ENCODE measurements at regions of chr5 and their contacts with region 1.

Region 1: GRCh38 chr5:76715736-76716455 is at the start of gene F2R:
- DNase-seq: no peak
- ATAC-seq: peak; percentile 82
- H3K4me3 ChIP-seq: peak within 1 kb of the TSS; percentile 79
- H3K27ac ChIP-seq: no peak within 1 kb of the TSS
- H3K4me1 ChIP-seq: peaks cover 16% of the 10 kb centered on the region
- H3K27me3 ChIP-seq: peaks cover 0 to 13% of the 10 kb centered on the region in 2 experiments; a peak in 2 of 4 replicates
- CTCF ChIP-seq: peak; percentile 38 to 64 (median 49); a peak in 4 of 6 replicates
- EP300 ChIP-seq: no peak
- POLR2A ChIP-seq: peak; percentile 35; the same call in 1 of the 2 replicates
- RAD21 ChIP-seq: peak; percentile 34; the same call in 1 of the 2 replicates
- polyA plus RNA-seq, gene F2R: 1.8 to 2.4 TPM

Region 2: GRCh38 chr5:76451031-76451701 is 264.7 kb before region 1 on chr5:
- CTCF ChIA-PET with region 1: no interaction called
- POLR2A ChIA-PET with region 1: no interaction called
- RAD21 ChIA-PET with region 1: no interaction called
- SMC1A ChIA-PET with region 1: no interaction called
- in situ Hi-C with region 1: no loop called
- intact Hi-C with region 1: no loop called
- DNase-seq: no peak
- ATAC-seq: no peak
- H3K4me3 ChIP-seq: no peak overlapping the region
- H3K27ac ChIP-seq: no peak overlapping the region
- H3K4me1 ChIP-seq: no peaks in the 10 kb centered on the region
- H3K27me3 ChIP-seq: no peaks in the 10 kb centered on the region
- CTCF ChIP-seq: no peak
- EP300 ChIP-seq: no peak
- POLR2A ChIP-seq: no peak
- RAD21 ChIP-seq: no peak

Region 3: GRCh38 chr5:76601470-76601869 is 114.4 kb before region 1 on chr5:
- CTCF ChIA-PET with region 1: interaction called, 6 read pairs
- POLR2A ChIA-PET with region 1: no interaction called
- RAD21 ChIA-PET with region 1: no interaction called
- SMC1A ChIA-PET with region 1: interaction called, 10 read pairs
- in situ Hi-C with region 1: no loop called
- intact Hi-C with region 1: loop called (anchors 2 kb)
- DNase-seq: no peak
- ATAC-seq: peak; percentile 89
- H3K4me3 ChIP-seq: no peak overlapping the region
- H3K27ac ChIP-seq: no peak overlapping the region
- H3K4me1 ChIP-seq: no peaks in the 10 kb centered on the region
- H3K27me3 ChIP-seq: no peaks in the 10 kb centered on the region
- CTCF ChIP-seq: peak; percentile 58 to 72 (median 71); a peak in 5 of 6 replicates
- EP300 ChIP-seq: no peak
- POLR2A ChIP-seq: no peak
- RAD21 ChIP-seq: peak; percentile 94

Region 4: GRCh38 chr5:76701298-76701697 is 14.6 kb before region 1 on chr5:
- CTCF ChIA-PET with region 1: interaction called, 10 read pairs
- POLR2A ChIA-PET with region 1: no interaction called
- RAD21 ChIA-PET with region 1: interaction called, 3 read pairs
- SMC1A ChIA-PET with region 1: interaction called, 7 read pairs
- in situ Hi-C with region 1: no loop called
- intact Hi-C with region 1: no loop called
- DNase-seq: no peak
- ATAC-seq: no peak
- H3K4me3 ChIP-seq: no peak overlapping the region
- H3K27ac ChIP-seq: no peak overlapping the region
- H3K4me1 ChIP-seq: no peaks in the 10 kb centered on the region
- H3K27me3 ChIP-seq: no peaks in the 10 kb centered on the region
- CTCF ChIP-seq: no peak
- EP300 ChIP-seq: no peak
- POLR2A ChIP-seq: no peak
- RAD21 ChIP-seq: no peak

Region 5: GRCh38 chr5:76733049-76733417 is 17.1 kb after region 1 on chr5:
- CTCF ChIA-PET with region 1: interaction called, 153 read pairs
- POLR2A ChIA-PET with region 1: interaction called, 144 read pairs
- RAD21 ChIA-PET with region 1: interaction called, 254 read pairs
- SMC1A ChIA-PET with region 1: interaction called, 206 read pairs
- in situ Hi-C with region 1: no loop called
- intact Hi-C with region 1: loop called (anchors 1 kb)
- DNase-seq: peak; percentile 96
- ATAC-seq: peak; percentile 86
- H3K4me3 ChIP-seq: peak overlapping the region; percentile 50
- H3K27ac ChIP-seq: peak overlapping the region; percentile 61; the same call in 1 of the 2 replicates
- H3K4me1 ChIP-seq: peaks cover 29% of the 10 kb centered on the region
- H3K27me3 ChIP-seq: no peaks in the 10 kb centered on the region
- CTCF ChIP-seq: no peak
- EP300 ChIP-seq: peak; percentile 99 to 100
- POLR2A ChIP-seq: no peak
- RAD21 ChIP-seq: no peak

Measured in GM12878 (cell line).